Activated naive CD4-positive, alpha-beta T cell treated with anti-CD3 and anti-CD28 coated beads, Interleukin-2, amount 10 ng/mL, durations not matched to agents 7 days and 5 days (primary cell): ENCODE measurements at regions of chr14 and their contacts with region 1.

Region 1: GRCh38 chr14:88667555-88668273 is 104.9 kb downstream of the ZC3H14 start:
- DNase-seq: peak; percentile 45
- H3K4me3 Mint-ChIP-seq: no peak overlapping the region
- H3K27ac Mint-ChIP-seq: no peak overlapping the region
- H3K4me1 Mint-ChIP-seq: no peaks in the 10 kb centered on the region
- H3K27me3 Mint-ChIP-seq: no peaks in the 10 kb centered on the region

Region 2: DNA sequence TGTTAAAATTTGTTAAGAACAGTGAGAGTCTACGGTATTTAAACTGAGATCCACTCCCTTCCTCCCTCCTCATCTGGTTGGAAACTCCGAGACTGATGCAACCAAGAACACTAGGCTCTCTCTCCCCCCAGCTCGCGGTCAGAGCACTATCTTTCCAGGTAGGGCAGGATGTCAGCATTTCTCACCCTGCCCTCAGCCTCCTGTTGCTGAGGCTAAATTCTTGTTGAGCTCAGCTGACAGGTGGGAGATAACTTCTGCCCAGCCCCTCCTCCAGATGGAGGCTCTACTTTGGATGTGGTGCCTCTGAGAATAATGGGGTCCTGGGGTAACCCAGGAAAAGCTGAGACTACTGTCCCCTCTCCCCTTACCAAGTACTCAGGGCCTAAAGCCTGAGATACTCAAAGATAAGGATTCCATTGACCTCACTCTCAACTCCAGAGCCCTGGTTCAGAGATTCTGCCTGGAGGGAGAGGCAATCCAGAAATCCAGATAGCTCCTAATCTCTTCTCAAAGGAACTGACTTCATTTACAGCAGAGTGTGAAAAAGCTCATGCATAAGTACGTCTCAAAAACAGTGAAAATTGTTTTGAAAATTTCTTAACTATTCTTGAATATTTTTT is 14.9 kb after region 1 on chr14:
- CTCF ChIA-PET with region 1: interaction called, 21 read pairs
- DNase-seq: no peak
- H3K4me3 Mint-ChIP-seq: no peak overlapping the region
- H3K27ac Mint-ChIP-seq: no peak overlapping the region
- H3K4me1 Mint-ChIP-seq: no peaks in the 10 kb centered on the region
- H3K27me3 Mint-ChIP-seq: no peaks in the 10 kb centered on the region

Region 3: DNA sequence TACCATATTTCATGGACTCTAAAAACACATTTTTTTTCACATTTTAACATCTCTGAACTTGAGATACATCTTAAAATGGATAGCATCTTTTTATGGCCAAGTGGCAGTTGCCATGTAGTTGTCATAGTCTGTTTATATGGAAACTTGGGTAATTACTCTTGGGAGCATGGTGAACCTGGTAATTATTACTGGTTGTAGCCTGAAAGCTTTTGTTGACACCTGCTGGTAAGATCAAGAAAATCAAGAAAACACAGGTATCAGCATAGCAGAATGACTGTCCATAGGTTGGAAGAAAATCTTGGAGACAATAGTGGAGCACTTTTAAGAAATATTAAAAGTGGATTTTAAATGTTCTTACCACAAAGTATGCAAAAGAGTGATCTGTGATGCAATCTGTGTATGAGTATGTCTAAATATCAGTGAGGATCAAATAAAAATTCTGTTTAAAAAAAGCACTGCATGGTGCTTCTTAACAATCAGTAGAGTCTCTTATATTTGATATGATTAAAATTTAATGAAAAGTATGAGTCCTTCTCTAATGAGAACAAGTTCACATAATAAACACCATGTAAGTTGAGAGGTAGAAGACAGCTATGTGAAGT is 200.9 kb after region 1 on chr14:
- CTCF ChIA-PET with region 1: interaction called, 17 read pairs
- DNase-seq: no peak
- H3K4me3 Mint-ChIP-seq: no peak overlapping the region
- H3K27ac Mint-ChIP-seq: no peak overlapping the region
- H3K4me1 Mint-ChIP-seq: no peaks in the 10 kb centered on the region
- H3K27me3 Mint-ChIP-seq: peaks cover 3% of the 10 kb centered on the region